Mammary epithelial cell (primary cell): ENCODE measurements at regions of chr5 and their contacts with region 1.

Region 1: GRCh38 chr5:1004461-1005248 is 3.9 kb upstream of the NKD2 start:
- DNase-seq: no peak
- H3K4me3 ChIP-seq: peak overlapping the region; percentile 2 to 38 (median 25)
- H3K27ac ChIP-seq: no peak overlapping the region
- H3K4me1 ChIP-seq: peaks cover 30% of the 10 kb centered on the region
- H3K27me3 ChIP-seq: peaks cover 26% of the 10 kb centered on the region
- CTCF ChIP-seq: peak in 1 of 2 donors; percentile 45

Region 2: DNA sequence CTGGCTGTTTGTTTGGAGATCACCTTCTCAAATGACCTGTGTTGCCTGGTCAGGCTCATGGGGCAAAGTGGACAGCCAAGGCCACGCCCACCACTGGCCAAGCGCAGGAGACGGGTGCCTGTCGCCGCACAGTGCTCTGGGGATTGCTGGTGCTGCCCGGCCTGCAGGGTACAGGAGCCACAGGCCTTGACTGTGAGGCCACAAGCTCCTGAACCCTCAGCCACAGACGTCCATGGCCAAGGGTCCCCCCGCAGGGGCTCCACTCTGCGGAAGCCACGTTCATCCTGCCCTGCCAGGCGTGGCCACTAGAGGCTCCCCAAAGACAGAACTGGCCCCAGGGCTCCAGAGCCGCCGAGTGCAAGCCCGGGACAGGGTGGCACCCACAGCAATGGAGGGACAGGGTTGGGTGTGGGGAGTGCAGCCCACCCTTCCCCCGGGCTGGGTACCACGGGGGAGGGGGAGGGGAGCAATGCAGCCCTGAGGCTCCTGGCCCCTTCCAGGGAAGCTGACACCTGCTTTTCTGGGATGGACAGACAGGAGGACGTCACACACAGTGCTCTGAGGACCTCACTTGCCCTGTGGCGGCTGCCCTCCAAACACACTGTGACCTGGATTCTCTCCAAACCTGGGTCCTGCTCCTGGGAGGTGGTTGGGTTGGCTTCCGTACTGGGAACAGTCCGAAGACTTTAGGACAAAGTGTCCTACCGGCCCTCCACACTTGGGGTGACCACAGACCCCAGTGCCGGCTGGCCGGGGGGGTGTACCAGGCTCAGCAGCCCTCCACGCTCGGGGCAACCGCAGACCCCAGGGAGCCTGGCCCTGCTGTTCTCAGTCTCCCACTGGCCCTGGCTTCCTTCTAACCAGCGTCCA is 333.0 kb before region 1 on chr5:
- CTCF ChIA-PET with region 1: no interaction called
- dilution Hi-C with region 1: no loop called
- in situ Hi-C with region 1: no loop called
- intact Hi-C with region 1: loop called (anchors 5 kb)
- DNase-seq: peak; percentile 36
- H3K4me3 ChIP-seq: no peak overlapping the region
- H3K27ac ChIP-seq: peak overlapping the region; percentile 20
- H3K4me1 ChIP-seq: peaks cover 26% of the 10 kb centered on the region
- H3K27me3 ChIP-seq: peaks cover 4% of the 10 kb centered on the region
- CTCF ChIP-seq: peak; percentile 69 to 97

Region 3: DNA sequence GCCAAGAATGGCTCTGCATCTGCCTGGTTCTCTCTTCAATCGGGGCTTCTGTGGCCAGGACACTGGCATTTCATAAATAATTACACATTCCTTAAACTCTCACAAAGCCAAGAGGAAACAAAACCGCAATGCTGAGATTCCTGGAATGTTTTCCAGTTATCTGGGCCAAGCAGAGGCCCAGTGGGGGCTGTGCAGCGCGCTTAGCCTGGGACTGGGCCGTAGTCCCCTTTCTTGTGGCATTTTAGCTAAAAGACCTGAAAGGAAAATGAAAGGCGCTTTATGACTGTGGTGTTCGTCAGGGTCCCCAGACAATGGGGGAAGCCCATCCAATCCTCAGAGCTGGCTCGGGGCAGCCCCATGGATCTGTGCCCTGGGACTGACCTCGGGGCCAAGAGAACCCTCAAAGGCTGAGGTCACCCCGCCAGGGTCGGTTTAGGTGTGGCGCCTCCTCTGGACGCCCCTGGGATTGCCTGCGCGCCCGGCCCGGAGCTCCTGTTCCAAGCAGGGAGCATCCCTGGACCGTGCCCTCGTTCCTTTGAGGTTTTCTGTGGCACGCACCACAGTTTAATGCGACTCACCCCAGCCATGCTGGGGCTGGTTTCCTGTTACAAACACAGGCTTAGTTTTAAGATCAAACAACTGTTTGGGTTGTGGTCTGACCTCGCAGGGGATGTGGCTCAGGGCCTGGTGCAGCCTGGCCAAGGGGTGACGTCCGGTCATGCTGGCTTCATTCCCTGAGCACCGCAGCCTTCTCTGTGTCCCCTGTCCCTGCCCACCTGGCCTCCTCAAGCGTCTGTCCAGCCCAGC is 47.5 kb before region 1 on chr5:
- CTCF ChIA-PET with region 1: no interaction called
- dilution Hi-C with region 1: no loop called
- in situ Hi-C with region 1: no loop called
- intact Hi-C with region 1: loop called (anchors 1 kb)
- DNase-seq: peak; percentile 46
- H3K4me3 ChIP-seq: no peak overlapping the region
- H3K27ac ChIP-seq: no peak overlapping the region
- H3K4me1 ChIP-seq: peaks cover 31% of the 10 kb centered on the region
- H3K27me3 ChIP-seq: peaks cover 16% of the 10 kb centered on the region
- CTCF ChIP-seq: peak in 1 of 2 donors; percentile 20